HepG2 (cell line): ENCODE measurements at regions of chr12 and their contacts with region 1.

Region 1: GRCh38 chr12:9134981-9135628 is 19.4 kb upstream of the A2M start:
- DNase-seq: peak; percentile 56
- ATAC-seq: peak; percentile 61
- H3K4me3 ChIP-seq: peak overlapping the region in 1 of 3 experiments; percentile 49; a peak in 1 of 6 replicates
- H3K27ac ChIP-seq: peak overlapping the region; percentile 96
- H3K4me1 ChIP-seq: peaks cover 71% of the 10 kb centered on the region
- H3K27me3 ChIP-seq: no peaks in the 10 kb centered on the region
- CTCF ChIP-seq: peak; percentile 67
- EP300 ChIP-seq: no peak
- POLR2A ChIP-seq: no peak
- RAD21 ChIP-seq: peak; percentile 34

Region 2: DNA sequence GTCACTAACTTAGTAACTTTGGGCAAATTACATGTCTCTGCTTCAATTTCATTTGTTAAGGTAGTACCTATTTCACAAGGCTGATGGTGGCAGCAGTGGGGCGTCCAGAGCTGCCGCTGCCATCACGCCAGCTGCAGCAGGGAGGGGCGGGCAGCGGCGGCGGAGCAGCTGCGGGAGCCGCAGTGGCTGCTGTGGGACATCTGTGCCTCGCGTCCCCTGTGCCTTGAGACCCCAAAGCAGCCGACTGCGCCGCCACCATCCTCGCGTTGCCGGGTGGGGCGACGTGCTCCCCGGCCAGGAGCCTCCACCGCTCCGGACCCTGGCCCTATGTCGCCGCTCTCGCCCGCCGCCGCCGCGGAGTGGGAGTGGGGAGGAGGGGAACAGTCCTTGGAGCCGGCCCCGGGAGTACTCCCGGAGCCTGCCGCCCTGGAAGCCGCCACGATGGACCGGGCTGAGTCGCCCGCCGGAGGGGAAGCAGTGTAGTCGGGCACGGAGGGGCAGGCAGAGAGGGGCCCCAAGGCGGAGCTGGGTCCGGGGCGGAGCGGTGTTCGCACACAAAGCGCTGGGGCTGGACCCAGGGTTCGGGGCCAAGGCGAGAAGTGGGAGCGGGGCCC is 70.8 kb before region 1 on chr12:
- CTCF ChIA-PET with region 1: no interaction called
- POLR2A ChIA-PET with region 1: interaction called, 15 read pairs
- in situ Hi-C with region 1: no loop called
- intact Hi-C with region 1: no loop called
- DNase-seq: peak; percentile 65
- ATAC-seq: peak; percentile 42
- H3K4me3 ChIP-seq: peak overlapping the region; percentile 84 to 90 (median 89)
- H3K27ac ChIP-seq: peak overlapping the region; percentile 95
- H3K4me1 ChIP-seq: peaks cover 44% of the 10 kb centered on the region
- H3K27me3 ChIP-seq: no peaks in the 10 kb centered on the region; a peak in 1 of 5 replicates
- CTCF ChIP-seq: peak; percentile 81
- EP300 ChIP-seq: no peak
- POLR2A ChIP-seq: peak; percentile 13 to 35; a peak in 1 of 4 replicates
- RAD21 ChIP-seq: peak; percentile 54

Region 3: GRCh38 chr12:9124383-9125031 is 10.6 kb before region 1 on chr12:
- CTCF ChIA-PET with region 1: no interaction called
- POLR2A ChIA-PET with region 1: interaction called, 16 read pairs
- in situ Hi-C with region 1: no loop called
- intact Hi-C with region 1: loop called (anchors 1 kb)
- DNase-seq: no peak
- ATAC-seq: no peak
- H3K4me3 ChIP-seq: no peak overlapping the region
- H3K27ac ChIP-seq: peak overlapping the region; percentile 85
- H3K4me1 ChIP-seq: peaks cover 79% of the 10 kb centered on the region
- H3K27me3 ChIP-seq: no peaks in the 10 kb centered on the region; a peak in 1 of 5 replicates
- CTCF ChIP-seq: no peak
- EP300 ChIP-seq: no peak
- POLR2A ChIP-seq: no peak
- RAD21 ChIP-seq: no peak